Activated B cell treated with CpG ODN at 0.5 μM for 24 hours (primary cell): ENCODE measurements at regions of chr2 and their contacts with region 1.

Region 1: DNA sequence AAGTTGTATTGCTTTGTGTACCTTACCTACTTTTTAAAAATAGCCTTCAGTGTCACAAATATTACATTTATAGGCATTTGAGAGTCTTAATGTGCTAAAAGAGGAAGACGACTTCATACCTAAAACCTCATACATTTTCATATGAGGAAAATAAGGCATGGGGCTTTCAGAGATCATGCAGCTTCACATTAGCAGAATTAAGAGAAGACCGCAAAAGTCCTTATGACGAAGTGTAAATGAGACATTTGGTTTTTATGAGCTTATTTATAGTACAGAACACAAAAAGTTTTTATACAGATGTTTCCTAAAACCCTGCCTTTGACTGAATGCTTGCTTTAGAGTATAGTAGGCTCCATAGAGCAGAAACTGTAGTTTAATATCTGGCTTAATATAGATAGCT is 10.1 kb upstream of the CCDC138 start:
- DNase-seq: no peak
- ATAC-seq: peak; percentile 85
- H3K4me3 Mint-ChIP-seq: peak overlapping the region; percentile 65
- H3K27ac Mint-ChIP-seq: peak overlapping the region; percentile 85
- H3K4me1 Mint-ChIP-seq: peaks cover 47% of the 10 kb centered on the region
- H3K27me3 Mint-ChIP-seq: no peaks in the 10 kb centered on the region
- CTCF ChIP-seq: no peak

Region 2: GRCh38 chr2:108243566-108243965 is 532.9 kb before region 1 on chr2:
- CTCF ChIA-PET with region 1: no interaction called
- POLR2A ChIA-PET with region 1: no interaction called
- intact Hi-C with region 1: no loop called
- DNase-seq: no peak
- ATAC-seq: no peak
- H3K4me3 Mint-ChIP-seq: no peak overlapping the region
- H3K27ac Mint-ChIP-seq: no peak overlapping the region
- H3K4me1 Mint-ChIP-seq: no peaks in the 10 kb centered on the region
- H3K27me3 Mint-ChIP-seq: no peaks in the 10 kb centered on the region
- CTCF ChIP-seq: no peak

Region 3: GRCh38 chr2:108396845-108397244 is 379.6 kb before region 1 on chr2:
- CTCF ChIA-PET with region 1: no interaction called
- POLR2A ChIA-PET with region 1: no interaction called
- intact Hi-C with region 1: no loop called
- DNase-seq: no peak
- ATAC-seq: no peak
- H3K4me3 Mint-ChIP-seq: no peak overlapping the region
- H3K27ac Mint-ChIP-seq: no peak overlapping the region
- H3K4me1 Mint-ChIP-seq: no peaks in the 10 kb centered on the region
- H3K27me3 Mint-ChIP-seq: no peaks in the 10 kb centered on the region
- CTCF ChIP-seq: no peak

Region 4: DNA sequence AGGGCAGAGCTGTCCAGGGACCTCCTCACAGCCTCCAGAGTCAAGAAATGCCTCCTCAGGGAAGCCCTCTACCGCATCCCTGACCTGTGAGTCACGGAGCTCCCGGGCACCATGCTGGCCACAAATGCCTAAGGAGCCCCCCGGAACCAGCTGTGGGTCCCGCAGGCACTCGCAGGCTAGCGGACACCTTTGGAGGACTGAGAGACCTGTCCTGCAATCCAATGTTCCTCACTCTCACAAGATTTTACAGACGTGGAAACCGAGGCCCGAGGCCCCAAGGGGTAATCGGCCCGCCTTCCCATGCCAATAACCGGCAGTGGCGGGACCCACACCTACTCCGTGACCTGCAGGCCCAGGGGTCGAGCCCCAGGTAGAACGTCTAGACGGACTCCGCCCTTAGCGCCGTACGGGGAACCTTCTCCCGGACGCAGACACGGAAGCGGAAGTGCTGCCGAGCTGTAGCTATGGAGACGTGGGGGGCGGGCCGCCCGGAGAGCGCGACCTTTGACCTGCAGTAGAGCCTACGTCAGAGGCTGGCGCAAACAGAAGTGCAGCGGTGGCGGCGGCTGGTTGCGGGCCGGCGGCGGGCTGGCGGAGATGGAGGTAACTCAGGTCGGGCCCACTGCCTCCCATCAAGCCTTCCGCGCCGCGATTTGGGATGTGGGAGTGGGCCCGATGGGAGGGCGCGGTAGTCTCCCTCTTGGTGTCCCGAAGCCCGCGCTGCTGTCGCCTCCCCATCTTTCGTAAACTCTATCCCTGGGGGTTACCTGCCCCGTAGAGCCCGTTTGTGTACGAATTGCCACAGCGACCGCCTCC is 327.6 kb before region 1 on chr2 and contains the start of gene GCC2:
- CTCF ChIA-PET with region 1: no interaction called
- POLR2A ChIA-PET with region 1: no interaction called
- intact Hi-C with region 1: loop called (anchors 1 kb)
- DNase-seq: peak; percentile 96
- ATAC-seq: peak; percentile 96
- H3K4me3 Mint-ChIP-seq: peak within 1 kb of the TSS; percentile 98
- H3K27ac Mint-ChIP-seq: peak within 1 kb of the TSS; percentile 96
- H3K4me1 Mint-ChIP-seq: peaks cover 53% of the 10 kb centered on the region
- H3K27me3 Mint-ChIP-seq: no peaks in the 10 kb centered on the region
- CTCF ChIP-seq: no peak
- total RNA-seq, gene GCC2: 44.0 and 53.8 TPM in 2 replicates

Region 5: DNA sequence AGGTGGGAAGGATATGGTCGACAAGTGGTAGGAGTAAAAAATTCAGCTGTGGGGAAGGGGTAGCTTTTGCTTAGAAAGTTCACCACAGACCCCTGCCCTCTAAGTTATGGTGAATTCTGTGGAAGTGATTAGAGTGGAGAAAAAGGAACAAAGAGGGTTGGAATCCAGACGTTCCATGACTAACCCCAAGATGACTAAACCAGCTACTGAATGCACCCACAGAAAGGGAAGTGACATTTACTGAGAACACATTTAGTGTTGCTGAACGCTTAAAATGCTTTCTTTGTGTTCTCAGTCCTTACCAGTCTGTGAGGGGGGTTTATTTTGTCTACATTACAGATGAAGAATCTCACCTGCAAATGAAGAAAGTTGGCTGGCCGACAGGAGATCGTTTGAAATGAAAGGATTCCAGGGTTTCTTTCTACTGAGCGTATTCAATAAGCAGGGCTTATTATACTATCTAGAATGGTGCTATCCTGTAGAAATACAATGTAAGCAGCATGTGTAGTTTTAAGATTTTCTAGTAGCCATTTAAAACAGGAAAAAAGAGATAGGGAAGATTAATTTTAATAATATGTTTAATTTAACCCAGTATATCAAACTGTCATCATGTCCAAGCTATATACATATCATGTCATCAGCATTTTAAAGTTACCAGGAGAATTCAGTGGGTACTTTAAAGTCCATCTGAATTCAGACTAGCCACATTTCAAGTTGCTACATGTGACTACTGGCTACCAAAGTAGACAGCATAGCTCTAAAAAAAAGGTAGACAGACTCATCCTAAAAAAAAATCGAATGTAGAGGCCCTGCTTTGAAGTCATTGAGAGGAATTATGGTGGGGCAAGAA is 182.1 kb before region 1 on chr2:
- CTCF ChIA-PET with region 1: no interaction called
- POLR2A ChIA-PET with region 1: no interaction called
- intact Hi-C with region 1: loop called (anchors 5 kb)
- DNase-seq: no peak
- ATAC-seq: peak; percentile 75
- H3K4me3 Mint-ChIP-seq: peak overlapping the region; percentile 64
- H3K27ac Mint-ChIP-seq: peak overlapping the region; percentile 83
- H3K4me1 Mint-ChIP-seq: peaks cover 78% of the 10 kb centered on the region
- H3K27me3 Mint-ChIP-seq: no peaks in the 10 kb centered on the region
- CTCF ChIP-seq: no peak

Region 6: GRCh38 chr2:108786354-108787199 is 10.1 kb after region 1 on chr2 and contains the start of gene CCDC138:
- CTCF ChIA-PET with region 1: no interaction called
- POLR2A ChIA-PET with region 1: interaction called, 19 read pairs
- intact Hi-C with region 1: loop called (anchors 1 kb)
- DNase-seq: peak; percentile 92
- ATAC-seq: peak; percentile 97
- H3K4me3 Mint-ChIP-seq: peak within 1 kb of the TSS; percentile 99
- H3K27ac Mint-ChIP-seq: peak within 1 kb of the TSS; percentile 96
- H3K4me1 Mint-ChIP-seq: peaks cover 23% of the 10 kb centered on the region
- H3K27me3 Mint-ChIP-seq: no peaks in the 10 kb centered on the region
- CTCF ChIP-seq: no peak
- total RNA-seq, gene CCDC138: 10.3 and 10.6 TPM in 2 replicates